ENCODE measurements at regions of chr2 and their contacts with region 1.

Region 1: DNA sequence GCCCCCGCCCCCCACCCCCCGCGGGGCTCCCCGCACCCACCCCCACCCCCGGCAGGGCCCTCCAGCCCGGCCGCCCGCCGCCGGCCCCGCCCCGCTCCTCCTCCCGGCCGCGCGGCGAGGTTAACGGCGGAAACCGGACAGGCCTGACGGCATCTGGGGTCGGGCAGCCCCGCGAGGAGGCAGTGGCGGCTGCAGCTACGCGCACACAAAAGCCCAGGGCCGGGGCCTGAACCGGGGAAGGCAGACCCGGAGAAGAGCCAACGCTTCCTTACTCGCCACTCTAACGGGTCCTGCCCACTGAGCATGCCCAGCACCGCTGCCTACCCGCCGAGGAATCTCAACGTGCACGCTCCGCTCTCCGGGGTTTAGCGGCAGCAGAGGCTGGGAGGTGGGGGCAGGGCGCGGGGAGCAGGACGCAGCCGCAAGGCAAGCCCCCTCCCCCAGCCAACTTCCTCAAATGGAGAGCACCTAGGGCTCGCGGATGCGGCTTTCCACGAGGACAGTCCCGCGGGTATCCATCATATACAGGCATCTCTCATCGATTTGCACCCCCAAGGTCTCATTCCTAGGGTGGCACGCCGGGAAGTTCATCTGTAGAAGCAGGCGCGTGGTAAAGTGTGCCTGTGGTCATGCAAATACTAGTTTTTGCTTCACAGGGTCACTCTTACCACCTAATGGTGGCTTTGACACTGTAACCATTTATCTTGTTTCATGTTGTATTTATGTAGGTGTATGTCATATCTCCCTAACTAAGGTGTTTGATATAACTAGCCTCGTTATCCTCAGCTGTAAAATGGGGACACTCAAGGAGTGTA is at the start of gene MEMO1:
- DNase-seq: peak; percentile 91
- H3K4me3 ChIP-seq: peak within 1 kb of the TSS; percentile 66 to 83
- H3K27ac ChIP-seq: peak within 1 kb of the TSS; percentile 93 to 94
- H3K4me1 ChIP-seq: peaks cover 8% of the 10 kb centered on the region
- H3K27me3 ChIP-seq: no peaks in the 10 kb centered on the region
- CTCF ChIP-seq: peak in 1 of 4 experiments; percentile 15
- POLR2A ChIP-seq: peak; percentile 43
- total RNA-seq, gene MEMO1: 25.7 to 38.7 TPM

Region 2: GRCh38 chr2:31233741-31234682 is 776.9 kb before region 1 on chr2 and contains the start of gene EHD3:
- intact Hi-C with region 1: loop called (anchors 10 kb)
- DNase-seq: peak; percentile 83
- H3K4me3 ChIP-seq: peak within 1 kb of the TSS; percentile 50 to 54
- H3K27ac ChIP-seq: peak within 1 kb of the TSS; percentile 48 to 66
- H3K4me1 ChIP-seq: peaks cover 2% of the 10 kb centered on the region
- H3K27me3 ChIP-seq: no peaks in the 10 kb centered on the region
- CTCF ChIP-seq: peak in 3 of 4 experiments; percentile 53 to 72 (median 62)
- POLR2A ChIP-seq: peak; percentile 38
- total RNA-seq, gene EHD3: 7.2 to 7.9 TPM

Region 3: GRCh38 chr2:31785876-31786275 is 225.0 kb before region 1 on chr2:
- intact Hi-C with region 1: no loop called
- DNase-seq: no peak
- H3K4me3 ChIP-seq: no peak overlapping the region
- H3K27ac ChIP-seq: no peak overlapping the region
- H3K4me1 ChIP-seq: no peaks in the 10 kb centered on the region
- H3K27me3 ChIP-seq: no peaks in the 10 kb centered on the region
- CTCF ChIP-seq: no peak
- POLR2A ChIP-seq: no peak

Region 4: GRCh38 chr2:32063310-32064161 is 52.7 kb after region 1 on chr2 and contains the start of gene SPAST:
- intact Hi-C with region 1: loop called (anchors 1 kb)
- DNase-seq: peak; percentile 97
- H3K4me3 ChIP-seq: peak within 1 kb of the TSS; percentile 88 to 91
- H3K27ac ChIP-seq: peak within 1 kb of the TSS; percentile 89 to 93
- H3K4me1 ChIP-seq: no peaks in the 10 kb centered on the region
- H3K27me3 ChIP-seq: no peaks in the 10 kb centered on the region
- CTCF ChIP-seq: peak; percentile 49 to 95 (median 74)
- POLR2A ChIP-seq: peak; percentile 50
- total RNA-seq, gene SPAST: 19.4 to 28.1 TPM

Region 5: GRCh38 chr2:32277674-32278482 is 267.0 kb after region 1 on chr2 and contains the start of gene YIPF4:
- intact Hi-C with region 1: loop called (anchors 5 kb)
- DNase-seq: peak; percentile 88
- H3K4me3 ChIP-seq: peak within 1 kb of the TSS; percentile 77 to 96
- H3K27ac ChIP-seq: peak within 1 kb of the TSS; percentile 76 to 82
- H3K4me1 ChIP-seq: no peaks in the 10 kb centered on the region
- H3K27me3 ChIP-seq: no peaks in the 10 kb centered on the region
- CTCF ChIP-seq: no peak
- POLR2A ChIP-seq: peak; percentile 40
- total RNA-seq, gene YIPF4: 13.0 to 18.1 TPM